Gastrocnemius medialis (tissue), 4 donors: ENCODE measurements at regions of chr17 and their contacts with region 1.

Region 1: GRCh38 chr17:40536295-40537171 is 28.7 kb downstream of the CCR7 start:
- DNase-seq: peak in 1 of 2 donors; percentile 55
- ATAC-seq: peak; percentile 23 to 34
- H3K4me3 ChIP-seq: no peak overlapping the region
- H3K27ac ChIP-seq: peak overlapping the region; percentile 49 to 80 (median 69)
- H3K4me1 ChIP-seq: peaks cover 47 to 50% of the 10 kb centered on the region in 2 donors
- H3K27me3 ChIP-seq: no peaks in the 10 kb centered on the region
- CTCF ChIP-seq: no peak
- POLR2A ChIP-seq: no peak

Region 2: DNA sequence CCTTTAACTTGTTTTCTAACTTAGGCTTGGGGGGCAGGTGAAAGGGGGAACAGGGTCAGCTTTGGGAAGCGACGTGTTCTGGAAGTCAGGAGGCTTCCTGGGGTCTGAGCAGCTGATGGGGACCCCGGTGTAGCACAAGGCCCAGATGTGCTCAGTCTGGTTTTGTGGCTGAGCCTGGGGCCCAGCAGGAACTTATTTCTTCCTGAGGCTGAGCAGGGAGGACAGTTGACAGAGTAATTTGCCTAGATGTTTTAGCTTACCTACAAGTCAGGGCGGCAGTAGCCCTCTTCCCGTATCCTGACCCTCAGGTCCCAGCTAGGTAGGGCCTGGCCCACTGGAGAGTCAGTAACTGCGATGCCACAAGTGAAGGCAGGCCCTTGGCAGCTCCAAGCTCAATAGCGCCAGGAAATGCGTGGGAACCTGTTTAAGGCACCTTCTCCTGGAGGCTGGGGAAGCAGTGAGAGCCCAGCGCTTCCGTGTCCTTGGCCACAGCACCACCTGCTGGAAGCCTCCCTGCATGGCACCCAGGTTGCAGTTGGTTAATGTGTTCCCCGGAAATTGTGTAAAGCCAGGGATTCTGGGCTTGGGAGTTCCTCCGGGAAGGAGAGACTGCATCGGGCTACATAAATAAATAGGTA is 23.5 kb after region 1 on chr17:
- in situ Hi-C with region 1: no loop called
- intact Hi-C with region 1: loop called (anchors 2 kb)
- DNase-seq: peak; percentile 61 to 81
- ATAC-seq: peak; percentile 89 to 92
- H3K4me3 ChIP-seq: no peak overlapping the region
- H3K27ac ChIP-seq: peak overlapping the region; percentile 41 to 73 (median 65)
- H3K4me1 ChIP-seq: peaks cover 6 to 7% of the 10 kb centered on the region in 2 donors
- H3K27me3 ChIP-seq: no peaks in the 10 kb centered on the region
- CTCF ChIP-seq: peak; percentile 95 to 98 (median 96)
- POLR2A ChIP-seq: no peak

Region 3: DNA sequence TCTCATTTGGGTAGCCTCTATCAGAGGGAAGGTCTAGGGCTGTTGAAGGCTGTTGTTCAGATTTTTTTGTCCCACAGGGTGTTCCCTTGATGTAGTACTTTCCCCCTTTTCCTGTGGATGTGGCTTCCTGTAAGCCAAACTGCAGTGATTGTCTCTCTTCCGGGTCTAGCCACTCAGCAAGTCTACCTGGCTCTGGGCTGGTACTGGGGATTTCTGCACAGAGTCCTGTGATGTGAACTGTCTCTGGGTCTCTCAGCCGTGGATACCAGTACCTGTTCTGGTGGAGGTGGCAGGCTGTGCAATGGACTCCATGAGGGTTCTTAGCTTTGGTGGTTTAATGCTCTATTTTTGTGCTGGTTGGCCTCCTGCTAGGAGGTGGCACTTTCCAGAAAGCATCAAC is 52.0 kb after region 1 on chr17:
- in situ Hi-C with region 1: no loop called
- intact Hi-C with region 1: no loop called
- DNase-seq: no peak
- ATAC-seq: no peak
- H3K4me3 ChIP-seq: no peak overlapping the region
- H3K27ac ChIP-seq: no peak overlapping the region
- H3K4me1 ChIP-seq: peaks cover 0 to 4% of the 10 kb centered on the region in 2 donors
- H3K27me3 ChIP-seq: peaks cover 0 to 4% (median 2%) of the 10 kb centered on the region in 3 donors
- CTCF ChIP-seq: no peak
- POLR2A ChIP-seq: no peak